ENCODE measurements at regions of chr16 and their contacts with region 1.

Region 1: GRCh38 chr16:20348365-20349185 is 3.9 kb downstream of the UMOD start:
- DNase-seq: no peak
- ATAC-seq: no peak
- H3K4me3 ChIP-seq: no peak overlapping the region
- H3K27ac ChIP-seq: no peak overlapping the region
- H3K4me1 ChIP-seq: no peaks in the 10 kb centered on the region
- H3K27me3 ChIP-seq: no peaks in the 10 kb centered on the region
- CTCF ChIP-seq: no peak
- POLR2A ChIP-seq: no peak
- RAD21 ChIP-seq: no peak

Region 2: GRCh38 chr16:19817122-19817521 is 531.5 kb before region 1 on chr16:
- CTCF ChIA-PET with region 1: no interaction called
- POLR2A ChIA-PET with region 1: no interaction called
- dilution Hi-C with region 1: no loop called
- in situ Hi-C with region 1: no loop called
- intact Hi-C with region 1: no loop called
- DNase-seq: no peak
- ATAC-seq: no peak
- H3K4me3 ChIP-seq: no peak overlapping the region
- H3K27ac ChIP-seq: no peak overlapping the region
- H3K4me1 ChIP-seq: no peaks in the 10 kb centered on the region; the same call in 1 of the 2 replicates
- H3K27me3 ChIP-seq: no peaks in the 10 kb centered on the region
- CTCF ChIP-seq: no peak
- POLR2A ChIP-seq: no peak
- RAD21 ChIP-seq: no peak

Region 3: GRCh38 chr16:20166531-20167235 is 181.9 kb before region 1 on chr16:
- CTCF ChIA-PET with region 1: no interaction called
- POLR2A ChIA-PET with region 1: no interaction called
- dilution Hi-C with region 1: no loop called
- in situ Hi-C with region 1: loop called (anchors 25 kb)
- intact Hi-C with region 1: no loop called
- DNase-seq: no peak
- ATAC-seq: no peak
- H3K4me3 ChIP-seq: no peak overlapping the region
- H3K27ac ChIP-seq: no peak overlapping the region
- H3K4me1 ChIP-seq: no peaks in the 10 kb centered on the region
- H3K27me3 ChIP-seq: no peaks in the 10 kb centered on the region
- CTCF ChIP-seq: no peak
- POLR2A ChIP-seq: no peak
- RAD21 ChIP-seq: no peak

Measured in IMR-90 (cell line).